ENCODE measurements at regions of chr3 and their contacts with region 1.

Region 1: DNA sequence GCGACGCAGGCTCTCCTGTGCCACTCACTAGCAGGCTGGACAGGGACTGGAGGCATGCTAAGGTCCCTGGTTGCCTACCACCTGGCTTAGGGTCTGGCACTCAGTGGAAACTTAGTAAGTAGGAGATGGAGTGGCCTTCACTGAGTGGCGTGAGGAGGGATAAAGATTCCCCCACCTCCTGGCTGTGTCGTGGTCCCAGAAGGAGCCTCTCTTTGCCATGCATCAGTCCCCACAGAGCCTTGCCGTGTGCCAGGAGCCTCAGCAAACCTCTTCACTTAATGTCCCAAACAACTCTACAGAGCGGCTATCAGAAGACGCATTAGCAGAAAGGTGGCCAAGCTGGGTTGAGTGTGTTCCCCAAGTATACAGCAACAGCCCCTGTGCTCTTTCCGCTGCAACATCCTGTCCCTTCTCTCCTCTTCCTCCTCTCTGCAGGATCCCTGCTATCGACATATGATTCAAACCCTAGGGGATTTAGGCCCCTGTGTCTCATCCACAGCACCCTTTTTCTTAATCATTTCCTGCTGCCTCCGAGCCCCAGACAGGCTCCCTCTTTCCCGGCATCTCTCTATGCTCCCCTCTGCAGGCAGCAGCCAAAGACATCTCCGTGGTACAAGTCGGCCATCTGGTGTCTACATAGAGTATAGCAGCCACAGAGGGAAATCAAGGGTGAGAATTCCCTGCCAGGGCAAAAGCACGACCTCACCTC is 66.7 kb downstream of the SLC6A1 start:
- DNase-seq: peak; percentile 82
- H3K4me3 ChIP-seq: no peak overlapping the region
- H3K27ac ChIP-seq: no peak overlapping the region
- H3K4me1 ChIP-seq: no peaks in the 10 kb centered on the region
- H3K27me3 ChIP-seq: no peaks in the 10 kb centered on the region
- CTCF ChIP-seq: peak; percentile 82 to 88 (median 83)
- POLR2A ChIP-seq: no peak

Region 2: DNA sequence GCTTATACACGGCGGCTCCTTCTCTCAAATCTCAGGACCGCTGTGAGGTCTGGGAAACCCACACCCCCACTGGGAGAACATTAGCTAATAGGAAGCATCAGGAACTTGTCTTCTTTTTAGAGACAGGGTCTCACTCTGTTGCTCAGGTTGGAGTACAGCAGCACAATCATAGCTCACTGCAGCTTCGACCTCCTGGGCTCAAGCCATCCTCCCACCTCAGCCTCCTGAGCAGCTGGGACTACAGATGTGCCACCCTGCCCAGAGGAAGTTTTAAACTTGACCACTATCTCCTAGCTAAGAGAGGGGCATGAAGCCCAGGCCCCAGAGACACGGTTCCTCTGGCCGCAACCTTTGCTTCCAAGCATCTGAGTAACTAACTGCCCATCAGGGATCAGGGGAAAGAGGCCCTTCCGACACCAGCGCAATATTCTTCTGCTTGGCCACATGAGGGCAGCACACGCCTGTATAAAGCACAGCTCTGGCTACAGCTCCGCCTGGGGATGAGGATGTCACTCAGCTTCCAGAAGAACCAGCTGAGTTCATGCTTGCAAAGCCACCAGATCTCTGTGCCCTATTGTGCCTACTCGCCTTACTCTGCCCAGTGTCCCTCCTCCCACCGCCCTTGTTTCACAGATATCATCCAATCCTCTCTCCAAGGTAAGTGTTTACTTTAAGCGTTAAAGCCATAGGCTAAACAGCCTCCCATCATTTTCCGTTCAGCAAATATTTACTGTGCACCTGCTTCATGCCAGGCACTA is 300.8 kb before region 1 on chr3:
- intact Hi-C with region 1: loop called (anchors 10 kb)
- DNase-seq: peak; percentile 70
- H3K4me3 ChIP-seq: no peak overlapping the region
- H3K27ac ChIP-seq: no peak overlapping the region
- H3K4me1 ChIP-seq: no peaks in the 10 kb centered on the region
- H3K27me3 ChIP-seq: no peaks in the 10 kb centered on the region
- CTCF ChIP-seq: peak; percentile 63 to 78 (median 68)
- POLR2A ChIP-seq: no peak

Region 3: DNA sequence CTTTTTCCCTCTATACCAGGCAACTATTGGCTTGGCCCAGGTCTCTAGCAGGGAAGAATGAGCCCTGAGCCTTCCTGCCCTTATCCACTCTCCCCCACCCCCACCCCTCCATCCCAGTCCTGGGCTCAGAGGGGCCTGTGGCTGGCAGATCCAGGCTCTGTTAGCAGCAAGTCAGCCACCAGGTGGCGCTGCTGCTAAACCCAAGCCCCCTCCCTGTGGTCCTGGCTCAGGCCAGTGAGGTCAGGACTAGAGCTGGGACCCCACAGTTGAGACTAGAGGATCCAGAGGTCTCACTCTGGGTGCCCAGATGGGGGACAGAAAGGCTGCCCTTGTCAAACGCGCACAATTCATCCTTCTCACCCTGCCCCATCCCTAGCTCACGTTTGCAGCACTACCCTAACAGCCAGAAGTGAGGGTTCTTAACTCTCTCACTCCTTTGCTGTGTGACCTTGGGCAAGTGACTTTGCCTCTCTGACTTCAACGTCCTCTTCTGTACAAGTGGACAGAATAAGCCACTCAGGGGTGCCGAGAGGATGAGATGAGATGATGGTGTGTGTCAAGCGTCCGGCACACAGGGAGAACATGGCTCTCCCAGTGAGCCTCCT is 113.5 kb before region 1 on chr3:
- intact Hi-C with region 1: loop called (anchors 5 kb)
- DNase-seq: peak; percentile 85
- H3K4me3 ChIP-seq: no peak overlapping the region
- H3K27ac ChIP-seq: no peak overlapping the region
- H3K4me1 ChIP-seq: peaks cover 12% of the 10 kb centered on the region
- H3K27me3 ChIP-seq: no peaks in the 10 kb centered on the region
- CTCF ChIP-seq: peak; percentile 70 to 97 (median 86)
- POLR2A ChIP-seq: no peak

Region 4: DNA sequence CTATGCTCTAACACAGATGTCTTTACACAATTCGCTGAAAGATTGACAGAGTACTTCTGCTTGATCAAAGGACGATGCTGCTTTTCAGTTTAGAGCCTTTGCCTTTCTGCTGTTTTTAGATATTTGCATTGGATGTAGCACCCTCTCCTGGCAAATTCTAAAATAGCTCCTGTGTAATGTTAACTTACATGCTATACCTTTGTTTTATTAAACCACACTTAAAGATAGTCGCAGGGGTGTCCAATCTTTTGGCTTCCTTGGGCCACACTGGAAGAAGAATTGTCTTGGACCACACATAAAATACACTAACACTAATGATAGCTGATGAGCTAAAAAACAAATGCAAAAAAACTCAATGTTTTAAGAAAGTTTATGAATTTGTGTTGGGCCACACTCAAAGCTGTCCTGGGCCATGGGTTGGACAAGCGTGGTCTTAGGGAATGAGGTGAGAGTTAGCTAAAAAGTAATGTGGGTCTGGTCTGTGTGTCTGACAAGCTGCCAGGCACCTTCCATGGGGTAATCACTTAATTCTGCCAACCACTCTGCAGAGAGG is 275.9 kb after region 1 on chr3:
- intact Hi-C with region 1: loop called (anchors 10 kb)
- DNase-seq: no peak
- H3K4me3 ChIP-seq: no peak overlapping the region
- H3K27ac ChIP-seq: no peak overlapping the region
- H3K4me1 ChIP-seq: no peaks in the 10 kb centered on the region
- H3K27me3 ChIP-seq: no peaks in the 10 kb centered on the region
- CTCF ChIP-seq: peak in 2 of 3 experiments; percentile 38 to 51
- POLR2A ChIP-seq: no peak